ENCODE measurements at regions of chr1 and their contacts with region 1.

Region 1: DNA sequence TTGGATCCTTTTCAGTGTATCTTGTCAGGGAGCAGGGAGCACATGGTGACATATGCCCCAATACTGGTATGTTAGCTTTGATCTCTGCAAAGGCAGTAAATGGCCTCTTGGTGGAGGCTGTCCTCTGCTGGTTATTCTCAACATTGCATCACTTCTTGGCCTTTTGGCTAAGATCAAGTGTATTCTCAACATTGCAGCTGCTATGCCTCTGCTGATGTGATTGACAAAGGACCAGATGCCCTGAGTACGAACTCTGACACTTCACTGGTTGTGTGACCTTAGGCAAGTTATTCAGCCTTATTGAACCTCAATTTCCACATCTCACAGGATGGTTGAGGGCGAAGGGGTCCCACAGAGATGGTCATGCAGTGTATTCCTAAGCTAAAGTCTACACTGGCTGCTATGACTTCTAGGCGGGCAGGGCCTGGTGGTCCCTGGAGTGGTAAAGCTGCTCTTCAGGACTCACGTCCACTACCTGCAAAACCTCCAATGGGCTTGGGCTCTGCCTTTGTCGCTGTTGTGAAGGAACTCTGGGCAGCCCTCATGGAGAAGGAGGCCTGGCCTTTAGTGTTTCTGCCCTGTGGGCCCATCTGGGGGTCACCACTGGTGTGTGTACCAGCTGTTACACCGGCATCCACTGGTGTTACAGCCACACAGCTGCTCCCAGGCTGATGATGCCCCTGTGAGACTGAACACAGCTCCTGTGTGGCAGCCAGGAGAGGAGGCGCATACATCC is 64.8 kb downstream of the DNTTIP2 start:
- DNase-seq: peak; percentile 52 to 80
- ATAC-seq: peak; percentile 82 to 90
- H3K4me3 ChIP-seq: no peak overlapping the region
- H3K27ac ChIP-seq: peak overlapping the region; percentile 80 to 84
- H3K4me1 ChIP-seq: peaks cover 26% of the 10 kb centered on the region
- CTCF ChIP-seq: peak; percentile 93
- EP300 ChIP-seq: no peak
- POLR2A ChIP-seq: no peak
- RAD21 ChIP-seq: peak; percentile 97 to 100

Region 2: GRCh38 chr1:93615582-93616150 is 198.6 kb before region 1 on chr1:
- CTCF ChIA-PET with region 1: interaction called, 15 read pairs
- POLR2A ChIA-PET with region 1: no interaction called
- DNase-seq: peak; percentile 48 to 69
- ATAC-seq: peak in 1 of 2 experiments; percentile 16; a peak in 2 of 6 replicates
- H3K4me3 ChIP-seq: peak overlapping the region; percentile 5; the same call in 1 of the 3 replicates
- H3K27ac ChIP-seq: peak overlapping the region; percentile 99
- H3K4me1 ChIP-seq: peaks cover 84% of the 10 kb centered on the region
- CTCF ChIP-seq: no peak
- EP300 ChIP-seq: no peak
- POLR2A ChIP-seq: no peak
- RAD21 ChIP-seq: no peak

Region 3: GRCh38 chr1:93635614-93636543 is 178.3 kb before region 1 on chr1:
- CTCF ChIA-PET with region 1: interaction called, 236 read pairs
- POLR2A ChIA-PET with region 1: no interaction called
- DNase-seq: no peak
- ATAC-seq: no peak
- H3K4me3 ChIP-seq: no peak overlapping the region
- H3K27ac ChIP-seq: no peak overlapping the region
- H3K4me1 ChIP-seq: peaks cover 24% of the 10 kb centered on the region
- CTCF ChIP-seq: no peak
- EP300 ChIP-seq: no peak
- POLR2A ChIP-seq: no peak
- RAD21 ChIP-seq: no peak

Region 4: GRCh38 chr1:93680757-93681550 is 133.3 kb before region 1 on chr1:
- CTCF ChIA-PET with region 1: interaction called, 40 read pairs
- POLR2A ChIA-PET with region 1: interaction called, 10 read pairs
- DNase-seq: peak; percentile 90 to 92
- ATAC-seq: peak; percentile 93 to 94
- H3K4me3 ChIP-seq: peak overlapping the region; percentile 94
- H3K27ac ChIP-seq: peak overlapping the region; percentile 93 to 100
- H3K4me1 ChIP-seq: peaks cover 51% of the 10 kb centered on the region
- CTCF ChIP-seq: peak; percentile 36; the same call in 1 of the 3 replicates
- EP300 ChIP-seq: no peak
- POLR2A ChIP-seq: peak; percentile 31; the same call in 1 of the 2 replicates
- RAD21 ChIP-seq: peak; percentile 64 to 67

Region 5: DNA sequence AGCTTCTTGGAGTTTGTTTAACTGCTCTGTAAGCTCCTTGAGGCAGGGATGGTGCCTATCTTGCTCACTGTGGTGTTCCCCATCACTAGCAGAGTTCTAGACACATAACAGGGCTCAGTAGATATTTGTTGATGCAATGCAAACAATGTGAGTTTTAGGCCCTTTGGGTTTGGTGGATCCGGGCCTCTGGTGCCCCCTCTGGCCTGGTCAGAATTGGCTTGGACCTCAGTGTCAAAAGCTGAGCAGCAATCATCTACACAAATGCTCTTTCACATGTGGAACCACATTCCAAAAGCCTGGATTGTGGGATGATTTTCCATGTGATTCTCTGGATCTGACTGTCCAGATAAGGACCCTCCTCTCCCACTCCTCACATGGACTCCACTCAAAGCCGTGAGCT is 79.2 kb before region 1 on chr1:
- CTCF ChIA-PET with region 1: interaction called, 13 read pairs
- POLR2A ChIA-PET with region 1: no interaction called
- DNase-seq: peak in 1 of 2 experiments; percentile 19
- ATAC-seq: peak in 1 of 2 experiments; percentile 47; a peak in 3 of 6 replicates
- H3K4me3 ChIP-seq: no peak overlapping the region
- H3K27ac ChIP-seq: peak overlapping the region in 1 of 2 experiments; percentile 32; a peak in 2 of 6 replicates
- H3K4me1 ChIP-seq: peaks cover 16% of the 10 kb centered on the region
- CTCF ChIP-seq: no peak
- EP300 ChIP-seq: no peak
- POLR2A ChIP-seq: no peak
- RAD21 ChIP-seq: peak in 1 of 2 experiments; percentile 40; a peak in 1 of 5 replicates

Region 6: GRCh38 chr1:93827633-93828366 is 13.6 kb after region 1 on chr1:
- CTCF ChIA-PET with region 1: interaction called, 47 read pairs
- POLR2A ChIA-PET with region 1: no interaction called
- DNase-seq: peak in 1 of 2 experiments; percentile 45
- ATAC-seq: peak; percentile 56 to 90; a peak in 4 of 6 replicates
- H3K4me3 ChIP-seq: no peak overlapping the region
- H3K27ac ChIP-seq: peak overlapping the region; percentile 56 to 80; a peak in 5 of 6 replicates
- H3K4me1 ChIP-seq: peaks cover 21% of the 10 kb centered on the region
- CTCF ChIP-seq: no peak
- EP300 ChIP-seq: no peak
- POLR2A ChIP-seq: no peak
- RAD21 ChIP-seq: no peak